GM12878 (cell line): ENCODE measurements at regions of chr2 and their contacts with region 1.

Region 1: GRCh38 chr2:27754138-27754588 is 17.4 kb upstream of the MRPL33 start:
- DNase-seq: no peak
- ATAC-seq: peak; percentile 98
- H3K4me3 ChIP-seq: no peak overlapping the region
- H3K27ac ChIP-seq: no peak overlapping the region
- H3K4me1 ChIP-seq: no peaks in the 10 kb centered on the region
- H3K27me3 ChIP-seq: no peaks in the 10 kb centered on the region; a peak in 1 of 4 replicates
- CTCF ChIP-seq: peak; percentile 87 to 89 (median 87)
- EP300 ChIP-seq: no peak
- POLR2A ChIP-seq: no peak
- RAD21 ChIP-seq: peak; percentile 97

Region 2: DNA sequence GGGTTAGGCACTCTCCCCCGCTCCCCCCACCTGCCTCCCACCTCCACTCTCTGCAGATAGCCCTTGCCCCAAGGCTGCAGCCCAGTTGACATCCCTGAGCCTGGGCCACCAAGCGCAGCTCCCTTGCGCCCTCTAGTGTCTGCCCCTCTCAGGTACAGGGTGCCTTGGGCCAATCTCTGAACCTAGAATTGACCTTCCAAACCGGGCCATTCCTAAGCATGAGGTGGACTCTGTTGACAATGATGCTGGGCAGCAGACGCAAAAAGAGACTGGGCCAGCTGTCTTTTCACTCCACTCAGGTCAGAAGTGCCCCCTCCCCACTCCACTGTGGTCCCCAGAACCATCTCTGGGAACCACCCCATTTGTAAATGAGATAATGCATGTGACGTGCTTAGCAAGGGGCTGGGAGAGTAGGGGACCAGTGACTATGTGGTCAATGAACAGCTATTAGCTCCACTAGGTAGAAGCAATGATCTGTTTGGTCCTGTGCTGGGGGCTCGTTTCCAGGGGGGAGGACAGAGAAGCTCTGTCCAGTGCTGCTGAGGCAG is 698.4 kb after region 1 on chr2:
- CTCF ChIA-PET with region 1: interaction called, 7 read pairs
- POLR2A ChIA-PET with region 1: no interaction called
- RAD21 ChIA-PET with region 1: interaction called, 9 read pairs
- SMC1A ChIA-PET with region 1: interaction called, 5 read pairs
- in situ Hi-C with region 1: no loop called
- intact Hi-C with region 1: loop called (anchors 1 kb)
- DNase-seq: no peak
- ATAC-seq: peak; percentile 94
- H3K4me3 ChIP-seq: no peak overlapping the region
- H3K27ac ChIP-seq: no peak overlapping the region
- H3K4me1 ChIP-seq: 0 out of 2 replicates have a peak, but pooled peaks cover 3% of the 10 kb centered on the region
- H3K27me3 ChIP-seq: no peaks in the 10 kb centered on the region
- CTCF ChIP-seq: peak; percentile 90 to 93 (median 92)
- EP300 ChIP-seq: no peak
- POLR2A ChIP-seq: no peak
- RAD21 ChIP-seq: peak; percentile 92